Activated B cell treated with CpG ODN at 0.5 μM for 24 hours (primary cell): ENCODE measurements at regions of chr16 and their contacts with region 1.

Region 1: GRCh38 chr16:24539291-24539849 is at the start of gene RBBP6:
- DNase-seq: peak; percentile 96
- ATAC-seq: peak; percentile 92
- H3K4me3 Mint-ChIP-seq: peak within 1 kb of the TSS; percentile 100
- H3K27ac Mint-ChIP-seq: peak within 1 kb of the TSS; percentile 100
- H3K4me1 Mint-ChIP-seq: peaks cover 43% of the 10 kb centered on the region
- H3K27me3 Mint-ChIP-seq: no peaks in the 10 kb centered on the region
- CTCF ChIP-seq: no peak
- total RNA-seq, gene RBBP6: 85.3 and 85.8 TPM in 2 replicates

Region 2: GRCh38 chr16:24552705-24553246 is 13.4 kb after region 1 on chr16:
- CTCF ChIA-PET with region 1: no interaction called
- POLR2A ChIA-PET with region 1: interaction called, 5 read pairs
- intact Hi-C with region 1: loop called (anchors 2 kb)
- DNase-seq: no peak
- ATAC-seq: no peak
- H3K4me3 Mint-ChIP-seq: no peak overlapping the region
- H3K27ac Mint-ChIP-seq: no peak overlapping the region
- H3K4me1 Mint-ChIP-seq: peaks cover 7% of the 10 kb centered on the region
- H3K27me3 Mint-ChIP-seq: no peaks in the 10 kb centered on the region
- CTCF ChIP-seq: no peak

Region 3: GRCh38 chr16:24562811-24563210 is 23.4 kb after region 1 on chr16:
- CTCF ChIA-PET with region 1: no interaction called
- POLR2A ChIA-PET with region 1: no interaction called
- intact Hi-C with region 1: no loop called
- DNase-seq: no peak
- ATAC-seq: no peak
- H3K4me3 Mint-ChIP-seq: no peak overlapping the region
- H3K27ac Mint-ChIP-seq: no peak overlapping the region
- H3K4me1 Mint-ChIP-seq: no peaks in the 10 kb centered on the region
- H3K27me3 Mint-ChIP-seq: no peaks in the 10 kb centered on the region
- CTCF ChIP-seq: no peak

Region 4: DNA sequence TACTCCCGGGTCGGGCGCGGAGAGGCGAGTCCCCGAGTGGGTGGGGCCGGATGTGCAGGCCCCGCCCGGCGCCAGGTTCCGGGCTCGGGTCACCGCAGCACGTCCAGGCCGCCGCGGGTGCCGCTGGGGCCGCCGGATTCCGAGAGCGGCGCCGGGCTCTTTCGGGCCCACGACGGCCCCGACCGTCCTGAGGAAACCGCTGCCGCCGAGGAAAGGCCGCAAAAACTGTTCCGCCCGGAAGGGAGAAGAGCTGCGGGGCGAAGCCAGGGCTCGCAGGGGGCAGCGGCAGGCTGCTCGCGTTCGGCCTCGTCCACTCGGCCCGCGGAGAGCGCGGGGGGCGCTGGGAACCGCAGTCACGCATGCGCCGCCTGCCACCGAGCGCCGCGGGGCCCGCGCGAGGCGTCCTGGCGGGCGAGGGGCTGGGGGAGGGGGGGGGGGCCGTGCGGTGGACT is 718.2 kb after region 1 on chr16 and contains the start of gene ZKSCAN2:
- CTCF ChIA-PET with region 1: no interaction called
- POLR2A ChIA-PET with region 1: no interaction called
- intact Hi-C with region 1: loop called (anchors 1 kb)
- DNase-seq: peak; percentile 82
- ATAC-seq: peak; percentile 87
- H3K4me3 Mint-ChIP-seq: peak within 1 kb of the TSS; percentile 95
- H3K27ac Mint-ChIP-seq: peak within 1 kb of the TSS; percentile 93
- H3K4me1 Mint-ChIP-seq: peaks cover 46% of the 10 kb centered on the region
- H3K27me3 Mint-ChIP-seq: no peaks in the 10 kb centered on the region
- CTCF ChIP-seq: no peak
- total RNA-seq, gene ZKSCAN2: 8.3 and 10.3 TPM in 2 replicates